B cell (primary cell): ENCODE measurements at regions of chr5 and their contacts with region 1.

Region 1: GRCh38 chr5:40587284-40587882 is 92.3 kb upstream of the PTGER4 start:
- DNase-seq: no peak
- ATAC-seq: no peak
- H3K4me3 ChIP-seq: no peak overlapping the region
- H3K4me3 Mint-ChIP-seq: no peak overlapping the region
- H3K27ac ChIP-seq: no peak overlapping the region
- H3K27ac Mint-ChIP-seq: no peak overlapping the region
- H3K4me1 ChIP-seq: peaks cover 17 to 24% of the 10 kb centered on the region in 2 donors
- H3K4me1 Mint-ChIP-seq: peaks cover 28% of the 10 kb centered on the region
- H3K27me3 ChIP-seq: no peaks in the 10 kb centered on the region
- H3K27me3 Mint-ChIP-seq: no peaks in the 10 kb centered on the region
- CTCF ChIP-seq: no peak

Region 2: DNA sequence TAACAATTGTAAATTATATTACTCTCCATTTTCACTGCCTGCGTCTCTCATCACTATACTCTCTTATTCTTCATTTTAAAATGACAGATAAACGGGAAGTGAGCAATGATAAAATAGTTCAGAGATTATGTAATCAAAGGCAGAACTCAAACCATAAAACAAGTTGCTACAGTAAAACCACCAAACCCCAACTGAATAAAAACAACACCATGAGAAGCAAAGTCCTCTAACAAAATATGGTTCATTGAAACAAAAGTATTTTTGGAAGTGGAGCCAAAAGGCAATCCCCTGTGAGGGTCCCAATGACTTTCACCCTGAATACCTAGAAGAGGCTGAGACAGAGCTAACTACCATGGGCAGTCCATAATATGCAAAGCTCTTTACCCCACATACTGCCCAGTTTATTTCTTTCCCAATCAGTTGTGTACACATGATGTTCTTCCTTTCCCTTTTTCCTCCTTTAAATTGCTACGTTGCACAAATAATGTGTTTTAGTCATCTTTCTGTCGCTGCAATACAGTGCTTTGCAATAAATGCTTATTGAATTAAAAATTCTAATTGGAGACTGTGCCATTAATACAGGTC is 28.3 kb after region 1 on chr5:
- CTCF ChIA-PET with region 1: no interaction called
- POLR2A ChIA-PET with region 1: no interaction called
- intact Hi-C with region 1: loop called (anchors 5 kb)
- DNase-seq: peak; percentile 25
- ATAC-seq: no peak
- H3K4me3 ChIP-seq: no peak overlapping the region
- H3K4me3 Mint-ChIP-seq: no peak overlapping the region
- H3K27ac ChIP-seq: no peak overlapping the region
- H3K27ac Mint-ChIP-seq: peak overlapping the region; percentile 33
- H3K4me1 ChIP-seq: peaks cover 10 to 13% of the 10 kb centered on the region in 2 donors
- H3K4me1 Mint-ChIP-seq: peaks cover 14% of the 10 kb centered on the region
- H3K27me3 ChIP-seq: no peaks in the 10 kb centered on the region
- H3K27me3 Mint-ChIP-seq: no peaks in the 10 kb centered on the region
- CTCF ChIP-seq: no peak

Region 3: GRCh38 chr5:42064821-42065220 is 1477.4 kb after region 1 on chr5:
- CTCF ChIA-PET with region 1: no interaction called
- POLR2A ChIA-PET with region 1: no interaction called
- intact Hi-C with region 1: no loop called
- DNase-seq: no peak
- ATAC-seq: no peak
- H3K4me3 ChIP-seq: no peak overlapping the region
- H3K4me3 Mint-ChIP-seq: no peak overlapping the region
- H3K27ac ChIP-seq: no peak overlapping the region
- H3K27ac Mint-ChIP-seq: no peak overlapping the region
- H3K4me1 ChIP-seq: no peaks in the 10 kb centered on the region
- H3K4me1 Mint-ChIP-seq: no peaks in the 10 kb centered on the region
- H3K27me3 ChIP-seq: no peaks in the 10 kb centered on the region
- H3K27me3 Mint-ChIP-seq: no peaks in the 10 kb centered on the region
- CTCF ChIP-seq: no peak

Region 4: GRCh38 chr5:42349163-42349562 is 1761.8 kb after region 1 on chr5:
- CTCF ChIA-PET with region 1: no interaction called
- POLR2A ChIA-PET with region 1: no interaction called
- intact Hi-C with region 1: no loop called
- DNase-seq: no peak
- ATAC-seq: no peak
- H3K4me3 ChIP-seq: no peak overlapping the region
- H3K4me3 Mint-ChIP-seq: no peak overlapping the region
- H3K27ac ChIP-seq: no peak overlapping the region
- H3K27ac Mint-ChIP-seq: no peak overlapping the region
- H3K4me1 ChIP-seq: no peaks in the 10 kb centered on the region
- H3K4me1 Mint-ChIP-seq: no peaks in the 10 kb centered on the region
- H3K27me3 ChIP-seq: no peaks in the 10 kb centered on the region
- H3K27me3 Mint-ChIP-seq: no peaks in the 10 kb centered on the region
- CTCF ChIP-seq: no peak